Activated CD8-positive, alpha-beta T cell treated with anti-CD3 and anti-CD28 coated beads for 36 hours (primary cell): ENCODE measurements at regions of chr11 and their contacts with region 1.

Region 1: DNA sequence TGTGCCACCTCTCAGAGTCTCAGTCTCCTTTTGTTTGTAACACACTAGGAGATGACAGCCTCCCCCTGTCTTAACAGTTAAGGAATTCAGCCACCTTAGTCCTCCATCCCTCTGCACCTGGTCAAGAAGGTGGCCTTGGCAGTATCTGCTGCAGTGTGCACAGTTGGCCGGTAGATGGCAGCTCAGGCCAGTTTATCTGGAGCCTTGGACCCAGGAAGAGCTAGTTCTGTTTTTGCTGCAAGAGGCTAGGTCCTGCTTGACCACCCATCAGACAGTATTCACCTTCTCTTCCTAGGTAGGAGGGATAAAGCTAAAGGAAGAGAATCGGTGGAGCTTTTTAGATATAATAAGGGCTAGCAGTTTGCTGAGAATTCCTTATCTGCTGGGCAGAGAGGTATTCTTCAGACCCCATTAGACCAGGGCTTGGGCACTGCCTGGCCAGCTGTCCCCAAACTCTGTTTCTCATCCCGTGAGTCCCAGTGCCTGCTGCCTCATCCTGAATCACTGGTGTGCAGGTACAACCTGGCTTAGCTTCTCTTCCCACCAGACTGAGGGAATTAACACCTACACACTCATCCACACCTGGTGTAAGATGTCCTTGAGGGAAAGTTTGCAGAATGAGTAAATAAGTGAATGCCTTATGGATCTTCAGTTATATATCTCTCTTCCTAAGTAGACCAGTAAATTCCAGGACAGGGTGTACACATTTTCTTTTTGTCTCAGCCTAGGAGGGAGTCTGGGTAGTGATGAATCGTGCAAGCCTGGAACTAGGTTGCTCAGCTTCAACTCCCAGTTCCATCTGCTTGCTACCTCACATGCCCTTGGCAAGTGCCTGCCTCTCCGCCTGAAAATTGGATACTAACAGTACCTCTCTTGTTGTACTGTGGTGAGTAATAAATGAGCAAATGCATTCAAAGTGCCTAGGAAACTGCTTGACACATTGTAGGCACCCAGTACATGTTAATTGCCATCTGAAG is 70.8 kb upstream of the NARS2 start:
- DNase-seq: peak; percentile 72
- ATAC-seq: peak; percentile 70
- H3K4me3 Mint-ChIP-seq: no peak overlapping the region
- H3K27ac Mint-ChIP-seq: no peak overlapping the region
- H3K4me1 Mint-ChIP-seq: peaks cover 33% of the 10 kb centered on the region
- H3K27me3 Mint-ChIP-seq: no peaks in the 10 kb centered on the region
- CTCF ChIP-seq: peak; percentile 97

Region 2: GRCh38 chr11:78672850-78673615 is 27.5 kb after region 1 on chr11:
- CTCF ChIA-PET with region 1: interaction called, 13 read pairs
- POLR2A ChIA-PET with region 1: no interaction called
- intact Hi-C with region 1: no loop called
- DNase-seq: no peak
- ATAC-seq: no peak
- H3K4me3 Mint-ChIP-seq: no peak overlapping the region
- H3K27ac Mint-ChIP-seq: no peak overlapping the region
- H3K4me1 Mint-ChIP-seq: no peaks in the 10 kb centered on the region
- H3K27me3 Mint-ChIP-seq: no peaks in the 10 kb centered on the region
- CTCF ChIP-seq: no peak

Region 3: DNA sequence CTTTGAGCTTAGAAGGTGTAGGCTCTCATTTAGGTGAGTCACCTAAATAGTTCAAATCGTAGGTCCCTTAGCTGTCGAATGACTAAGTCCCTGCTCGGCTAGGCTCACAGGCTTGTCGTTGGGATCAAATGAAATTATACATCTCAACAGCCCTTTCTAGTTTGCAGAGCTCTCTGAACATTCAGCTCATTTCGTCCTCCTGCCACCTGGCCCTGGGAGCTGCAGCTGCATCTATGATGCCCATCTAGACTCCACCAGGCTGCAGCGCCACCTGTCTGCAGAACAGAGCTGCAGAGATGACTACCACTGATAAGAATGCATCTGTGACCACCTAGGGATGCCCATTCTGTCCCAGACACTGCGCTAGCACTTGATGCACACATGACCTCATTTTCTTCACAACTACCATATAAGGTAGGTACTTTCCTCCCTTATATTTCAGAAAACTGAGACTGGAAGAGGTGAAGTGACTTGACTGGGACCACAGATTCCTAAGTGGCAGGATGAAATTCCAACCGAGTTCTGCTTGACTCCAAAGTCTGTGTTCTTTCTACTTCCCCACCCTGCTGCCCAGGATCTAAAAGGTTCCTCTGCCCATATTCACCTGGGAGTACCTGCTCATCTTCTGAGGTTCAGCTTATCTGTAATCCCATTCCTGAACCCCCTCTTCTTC is 70.3 kb after region 1 on chr11:
- CTCF ChIA-PET with region 1: interaction called, 160 read pairs
- POLR2A ChIA-PET with region 1: no interaction called
- intact Hi-C with region 1: loop called (anchors 1 kb)
- DNase-seq: peak; percentile 78
- ATAC-seq: peak; percentile 83
- H3K4me3 Mint-ChIP-seq: no peak overlapping the region
- H3K27ac Mint-ChIP-seq: no peak overlapping the region
- H3K4me1 Mint-ChIP-seq: no peaks in the 10 kb centered on the region
- H3K27me3 Mint-ChIP-seq: peaks cover 5% of the 10 kb centered on the region
- CTCF ChIP-seq: peak; percentile 70

Region 4: DNA sequence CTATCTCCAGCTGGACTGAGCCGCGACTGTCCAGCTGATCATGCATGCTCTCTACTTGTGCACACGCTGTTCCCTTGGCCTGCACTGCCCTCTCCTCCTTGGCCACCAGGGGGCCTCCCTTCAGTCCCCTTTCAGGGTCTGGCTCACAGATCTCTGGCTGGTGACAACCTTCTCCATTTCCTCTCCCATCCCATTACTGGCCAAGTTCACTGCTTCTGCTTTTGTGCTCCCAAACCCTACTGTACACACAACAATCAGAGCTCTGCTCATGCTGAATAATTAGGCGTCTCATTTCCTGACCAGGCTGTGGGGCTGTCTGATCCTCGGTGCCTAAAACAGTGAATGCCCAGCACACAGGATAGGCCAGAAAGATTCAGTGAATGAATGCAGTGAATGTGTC is 153.1 kb after region 1 on chr11:
- CTCF ChIA-PET with region 1: interaction called, 14 read pairs
- POLR2A ChIA-PET with region 1: no interaction called
- intact Hi-C with region 1: no loop called
- DNase-seq: peak; percentile 59
- ATAC-seq: peak; percentile 81
- H3K4me3 Mint-ChIP-seq: no peak overlapping the region
- H3K27ac Mint-ChIP-seq: no peak overlapping the region
- H3K4me1 Mint-ChIP-seq: no peaks in the 10 kb centered on the region
- H3K27me3 Mint-ChIP-seq: peaks cover 2% of the 10 kb centered on the region
- CTCF ChIP-seq: peak; percentile 73

Region 5: GRCh38 chr11:78851878-78852586 is 206.5 kb after region 1 on chr11:
- CTCF ChIA-PET with region 1: no interaction called
- POLR2A ChIA-PET with region 1: no interaction called
- intact Hi-C with region 1: no loop called
- DNase-seq: no peak
- ATAC-seq: no peak
- H3K4me3 Mint-ChIP-seq: no peak overlapping the region
- H3K27ac Mint-ChIP-seq: no peak overlapping the region
- H3K4me1 Mint-ChIP-seq: no peaks in the 10 kb centered on the region
- H3K27me3 Mint-ChIP-seq: peaks cover 6% of the 10 kb centered on the region
- CTCF ChIP-seq: no peak

Region 6: GRCh38 chr11:79100093-79100910 is 454.8 kb after region 1 on chr11:
- CTCF ChIA-PET with region 1: interaction called, 25 read pairs
- POLR2A ChIA-PET with region 1: no interaction called
- intact Hi-C with region 1: no loop called
- DNase-seq: peak; percentile 52
- ATAC-seq: peak; percentile 74
- H3K4me3 Mint-ChIP-seq: no peak overlapping the region
- H3K27ac Mint-ChIP-seq: no peak overlapping the region
- H3K4me1 Mint-ChIP-seq: no peaks in the 10 kb centered on the region
- H3K27me3 Mint-ChIP-seq: peaks cover 2% of the 10 kb centered on the region
- CTCF ChIP-seq: peak; percentile 60